Activated CD4-positive, alpha-beta T cell treated with anti-CD3 and anti-CD28 coated beads for 36 hours (primary cell): ENCODE measurements at regions of chr9 and their contacts with region 1.

Region 1: GRCh38 chr9:75265525-75265972 is 177.2 kb downstream of the OSTF1 start:
- DNase-seq: peak; percentile 69
- ATAC-seq: peak; percentile 60
- H3K4me3 Mint-ChIP-seq: no peak overlapping the region
- H3K27ac Mint-ChIP-seq: no peak overlapping the region
- H3K4me1 Mint-ChIP-seq: no peaks in the 10 kb centered on the region
- H3K27me3 Mint-ChIP-seq: no peaks in the 10 kb centered on the region

Region 2: GRCh38 chr9:74887041-74887980 is 378.2 kb before region 1 on chr9 and contains the start of gene TRPM6:
- CTCF ChIA-PET with region 1: no interaction called
- POLR2A ChIA-PET with region 1: no interaction called
- intact Hi-C with region 1: no loop called
- DNase-seq: peak; percentile 56
- ATAC-seq: peak; percentile 76
- H3K4me3 Mint-ChIP-seq: peak within 1 kb of the TSS; percentile 72
- H3K27ac Mint-ChIP-seq: no peak within 1 kb of the TSS
- H3K4me1 Mint-ChIP-seq: peaks cover 10% of the 10 kb centered on the region
- H3K27me3 Mint-ChIP-seq: peaks cover 39% of the 10 kb centered on the region
- total RNA-seq, gene TRPM6: 0.07 TPM

Region 3: GRCh38 chr9:75053869-75054268 is 211.7 kb before region 1 on chr9:
- CTCF ChIA-PET with region 1: no interaction called
- POLR2A ChIA-PET with region 1: no interaction called
- intact Hi-C with region 1: no loop called
- DNase-seq: no peak
- ATAC-seq: no peak
- H3K4me3 Mint-ChIP-seq: no peak overlapping the region
- H3K27ac Mint-ChIP-seq: no peak overlapping the region
- H3K4me1 Mint-ChIP-seq: no peaks in the 10 kb centered on the region
- H3K27me3 Mint-ChIP-seq: no peaks in the 10 kb centered on the region

Region 4: GRCh38 chr9:75855509-75855908 is 590.0 kb after region 1 on chr9:
- CTCF ChIA-PET with region 1: no interaction called
- POLR2A ChIA-PET with region 1: no interaction called
- intact Hi-C with region 1: loop called in 1 of 2 experiments (anchors 10 kb)
- DNase-seq: peak; percentile 15
- ATAC-seq: no peak
- H3K4me3 Mint-ChIP-seq: no peak overlapping the region
- H3K27ac Mint-ChIP-seq: no peak overlapping the region
- H3K4me1 Mint-ChIP-seq: peaks cover 3% of the 10 kb centered on the region
- H3K27me3 Mint-ChIP-seq: peaks cover 3% of the 10 kb centered on the region

Region 5: GRCh38 chr9:75866273-75866871 is 600.8 kb after region 1 on chr9:
- CTCF ChIA-PET with region 1: interaction called, 5 read pairs
- POLR2A ChIA-PET with region 1: no interaction called
- intact Hi-C with region 1: loop called in 1 of 2 experiments (anchors 2 kb)
- DNase-seq: peak; percentile 56
- ATAC-seq: no peak
- H3K4me3 Mint-ChIP-seq: no peak overlapping the region
- H3K27ac Mint-ChIP-seq: no peak overlapping the region
- H3K4me1 Mint-ChIP-seq: peaks cover 10% of the 10 kb centered on the region
- H3K27me3 Mint-ChIP-seq: no peaks in the 10 kb centered on the region